ENCODE measurements at regions of chr9 and their contacts with region 1.

Region 1: DNA sequence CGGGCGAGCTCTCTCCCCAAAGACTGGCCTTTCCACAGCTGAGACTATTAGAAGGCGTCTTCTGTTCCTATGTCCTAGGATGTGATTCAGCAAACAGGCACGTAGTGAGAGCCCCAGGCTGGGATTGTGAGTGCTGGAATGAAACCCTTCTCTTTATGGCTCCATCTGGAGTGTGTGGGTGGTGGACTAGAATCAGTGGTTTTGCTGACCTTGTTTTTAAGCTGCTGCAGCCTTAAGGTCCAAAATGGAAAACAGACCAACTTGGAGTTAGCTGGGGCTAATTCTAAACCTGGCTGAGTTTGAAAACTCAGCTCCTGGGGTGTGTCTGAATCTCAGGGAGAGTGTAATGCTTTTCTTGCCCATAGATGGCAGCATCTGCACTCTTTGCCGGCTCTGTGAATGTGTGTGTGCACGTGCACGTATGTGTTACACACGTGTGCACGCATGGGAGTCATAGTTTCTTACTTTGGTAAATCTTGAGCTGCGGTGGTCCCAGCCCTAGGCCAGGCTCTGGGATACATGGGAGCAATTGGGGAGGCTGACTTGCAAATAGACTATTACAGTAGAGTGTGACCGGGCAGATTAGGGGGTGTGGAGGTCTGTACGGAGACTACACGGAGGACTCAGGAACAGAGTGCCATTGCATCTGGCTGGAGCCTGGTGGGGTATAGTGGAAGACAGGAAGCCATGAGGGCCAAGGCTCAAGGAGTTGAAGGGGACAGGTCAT is 10.7 kb downstream of the GSN start:
- DNase-seq: peak; percentile 60
- H3K4me3 Mint-ChIP-seq: no peak overlapping the region
- H3K27ac Mint-ChIP-seq: no peak overlapping the region
- H3K4me1 Mint-ChIP-seq: peaks cover 5% of the 10 kb centered on the region
- H3K27me3 Mint-ChIP-seq: no peaks in the 10 kb centered on the region

Region 2: GRCh38 chr9:121138973-121139372 is 139.7 kb before region 1 on chr9:
- CTCF ChIA-PET with region 1: no interaction called
- POLR2A ChIA-PET with region 1: no interaction called
- intact Hi-C with region 1: no loop called
- DNase-seq: no peak
- H3K4me3 Mint-ChIP-seq: no peak overlapping the region
- H3K27ac Mint-ChIP-seq: no peak overlapping the region
- H3K4me1 Mint-ChIP-seq: peaks cover 10% of the 10 kb centered on the region
- H3K27me3 Mint-ChIP-seq: no peaks in the 10 kb centered on the region

Region 3: DNA sequence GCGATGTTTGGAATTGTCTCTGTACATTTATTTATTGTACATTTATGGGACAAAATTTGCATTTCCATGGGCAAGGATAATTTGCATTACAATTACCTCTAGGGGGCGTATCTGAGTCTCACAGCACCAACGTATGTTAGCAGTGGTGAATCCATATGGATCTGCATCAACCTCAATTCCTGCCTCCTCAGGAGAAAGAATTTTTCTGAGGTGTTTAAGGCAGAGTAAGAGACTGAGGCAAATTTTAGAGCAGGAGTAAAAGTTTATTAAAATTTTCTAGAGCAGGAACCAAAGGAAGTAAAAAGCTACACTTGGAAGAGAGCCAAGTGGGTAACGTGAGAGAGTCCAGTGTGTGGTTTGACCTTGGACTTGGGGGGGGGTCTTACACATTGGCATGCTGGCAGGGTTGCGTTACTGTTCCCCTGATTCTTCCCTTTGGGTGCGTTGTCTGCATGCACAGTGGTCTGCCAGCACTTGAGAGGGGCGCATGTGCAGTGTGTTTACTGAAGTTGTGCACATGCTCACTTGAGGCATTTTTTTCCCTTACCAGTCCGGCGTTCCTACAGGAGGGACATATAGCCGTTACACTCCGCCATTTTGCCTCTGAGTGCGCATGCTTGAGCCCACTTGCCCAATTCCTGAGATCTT is 56.0 kb before region 1 on chr9:
- CTCF ChIA-PET with region 1: interaction called, 10 read pairs
- POLR2A ChIA-PET with region 1: no interaction called
- intact Hi-C with region 1: no loop called
- DNase-seq: no peak
- H3K4me3 Mint-ChIP-seq: no peak overlapping the region
- H3K27ac Mint-ChIP-seq: no peak overlapping the region
- H3K4me1 Mint-ChIP-seq: peaks cover 3% of the 10 kb centered on the region
- H3K27me3 Mint-ChIP-seq: no peaks in the 10 kb centered on the region

Region 4: GRCh38 chr9:121253821-121254471 is 24.8 kb before region 1 on chr9:
- CTCF ChIA-PET with region 1: interaction called, 16 read pairs
- POLR2A ChIA-PET with region 1: no interaction called
- intact Hi-C with region 1: no loop called
- DNase-seq: no peak
- H3K4me3 Mint-ChIP-seq: no peak overlapping the region
- H3K27ac Mint-ChIP-seq: no peak overlapping the region
- H3K4me1 Mint-ChIP-seq: no peaks in the 10 kb centered on the region
- H3K27me3 Mint-ChIP-seq: no peaks in the 10 kb centered on the region

Region 5: GRCh38 chr9:121267689-121268597 is 10.8 kb before region 1 on chr9 and contains the start of gene GSN:
- CTCF ChIA-PET with region 1: interaction called, 27 read pairs
- POLR2A ChIA-PET with region 1: interaction called, 9 read pairs
- intact Hi-C with region 1: no loop called
- DNase-seq: peak; percentile 66
- H3K4me3 Mint-ChIP-seq: peak within 1 kb of the TSS; percentile 58
- H3K27ac Mint-ChIP-seq: no peak within 1 kb of the TSS
- H3K4me1 Mint-ChIP-seq: peaks cover 13% of the 10 kb centered on the region
- H3K27me3 Mint-ChIP-seq: peaks cover 14% of the 10 kb centered on the region
- total RNA-seq, gene GSN: 2.6 to 2.9 TPM

Region 6: DNA sequence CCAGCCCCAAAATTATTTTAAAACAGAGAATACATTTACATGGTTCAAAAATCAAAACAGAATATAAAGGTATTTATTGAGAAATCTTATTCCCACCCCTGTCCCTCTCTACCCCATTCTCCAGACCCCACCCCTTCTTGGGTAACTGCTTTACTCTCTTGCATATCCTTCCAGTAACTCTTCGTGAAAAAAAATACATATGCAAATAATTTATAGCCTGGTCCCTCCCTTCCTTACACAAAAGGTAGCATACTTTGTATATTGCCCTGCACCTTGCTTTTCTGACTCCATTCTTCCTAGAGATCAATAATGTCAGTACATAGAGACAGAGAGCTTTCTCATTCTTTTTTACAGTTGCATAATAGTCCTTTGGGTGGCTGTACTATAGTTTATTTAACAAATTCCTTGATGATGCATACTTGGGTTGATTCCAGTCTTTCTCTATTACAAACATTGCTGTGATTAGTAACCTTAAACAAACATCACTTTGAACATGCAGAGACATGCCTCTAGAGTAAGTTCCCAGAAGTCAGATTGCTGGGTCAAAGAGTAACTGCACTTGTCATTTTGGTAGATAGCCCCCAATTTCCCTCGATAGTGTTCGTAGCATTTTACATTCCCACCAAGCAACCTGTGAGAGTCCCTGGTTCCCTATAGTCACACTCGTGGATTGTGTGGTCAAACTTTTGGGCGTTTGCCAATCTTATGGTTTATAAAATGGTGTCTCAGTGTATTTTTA is 43.5 kb after region 1 on chr9:
- CTCF ChIA-PET with region 1: interaction called, 24 read pairs
- POLR2A ChIA-PET with region 1: no interaction called
- intact Hi-C with region 1: no loop called
- DNase-seq: no peak
- H3K4me3 Mint-ChIP-seq: no peak overlapping the region
- H3K27ac Mint-ChIP-seq: no peak overlapping the region
- H3K4me1 Mint-ChIP-seq: peaks cover 14% of the 10 kb centered on the region
- H3K27me3 Mint-ChIP-seq: no peaks in the 10 kb centered on the region

Region 7: DNA sequence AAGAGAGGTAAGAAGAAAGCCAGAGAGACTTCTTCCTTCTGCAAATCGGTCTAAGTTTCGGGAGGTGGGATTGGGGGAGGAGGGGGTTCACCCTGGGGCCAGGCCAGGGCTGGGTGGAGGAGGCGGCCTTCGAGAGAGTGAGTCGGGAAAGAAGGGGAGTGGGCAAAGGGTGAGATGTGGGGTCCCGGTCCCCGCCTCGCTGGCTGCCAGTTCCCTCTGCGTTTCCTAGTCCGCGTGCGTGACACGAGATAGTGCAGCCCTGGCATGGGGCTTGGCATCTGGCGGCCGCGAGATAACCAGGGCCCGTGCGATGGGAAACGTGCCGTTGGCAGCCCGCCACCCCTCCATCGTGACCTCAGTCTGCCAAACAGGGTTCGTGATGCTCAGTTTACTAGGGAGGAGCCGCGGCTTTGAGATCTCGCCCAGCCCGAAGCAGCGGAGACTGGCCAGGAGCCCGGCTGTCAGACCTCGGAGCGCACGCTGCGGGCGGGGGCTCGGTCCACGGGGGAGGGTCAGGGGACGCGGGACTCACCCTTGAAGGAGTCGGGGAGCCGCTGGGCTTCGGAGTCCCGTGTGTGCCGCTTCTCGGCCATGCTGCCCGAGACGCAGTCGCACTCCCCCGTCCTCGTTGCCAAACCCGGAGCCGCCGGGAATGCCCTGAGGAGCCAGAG is 91.0 kb after region 1 on chr9 and contains the start of gene STOM:
- CTCF ChIA-PET with region 1: no interaction called
- POLR2A ChIA-PET with region 1: no interaction called
- intact Hi-C with region 1: no loop called
- DNase-seq: peak; percentile 79
- H3K4me3 Mint-ChIP-seq: peak within 1 kb of the TSS; percentile 93
- H3K27ac Mint-ChIP-seq: peak within 1 kb of the TSS; percentile 99
- H3K4me1 Mint-ChIP-seq: peaks cover 58% of the 10 kb centered on the region
- H3K27me3 Mint-ChIP-seq: no peaks in the 10 kb centered on the region
- total RNA-seq, gene STOM: 49.8 to 51.9 TPM

Region 8: GRCh38 chr9:121399883-121400607 is 121.3 kb after region 1 on chr9:
- CTCF ChIA-PET with region 1: interaction called, 12 read pairs
- POLR2A ChIA-PET with region 1: no interaction called
- intact Hi-C with region 1: no loop called
- DNase-seq: no peak
- H3K4me3 Mint-ChIP-seq: no peak overlapping the region
- H3K27ac Mint-ChIP-seq: no peak overlapping the region
- H3K4me1 Mint-ChIP-seq: no peaks in the 10 kb centered on the region
- H3K27me3 Mint-ChIP-seq: peaks cover 3% of the 10 kb centered on the region